ENCODE measurements at regions of chr12 and their contacts with region 1.

Region 1: GRCh38 chr12:47164724-47165439 is 85.1 kb upstream of the AMIGO2 start:
- DNase-seq: peak; percentile 21
- ATAC-seq: no peak; the same call in 1 of the 2 replicates
- H3K4me3 ChIP-seq: no peak overlapping the region
- H3K27ac ChIP-seq: no peak overlapping the region
- H3K4me1 ChIP-seq: no peaks in the 10 kb centered on the region
- H3K27me3 ChIP-seq: no peaks in the 10 kb centered on the region
- CTCF ChIP-seq: 0 out of 2 replicates have a peak, but pooled peaks have one; percentile 27

Region 2: GRCh38 chr12:47190271-47190750 is 25.4 kb after region 1 on chr12:
- CTCF ChIA-PET with region 1: no interaction called
- POLR2A ChIA-PET with region 1: no interaction called
- intact Hi-C with region 1: no loop called
- DNase-seq: peak; percentile 56
- ATAC-seq: 0 out of 2 replicates have a peak, but pooled peaks have one; percentile 33
- H3K4me3 ChIP-seq: no peak overlapping the region
- H3K27ac ChIP-seq: no peak overlapping the region
- H3K4me1 ChIP-seq: peaks cover 18% of the 10 kb centered on the region
- H3K27me3 ChIP-seq: no peaks in the 10 kb centered on the region
- CTCF ChIP-seq: no peak

Region 3: DNA sequence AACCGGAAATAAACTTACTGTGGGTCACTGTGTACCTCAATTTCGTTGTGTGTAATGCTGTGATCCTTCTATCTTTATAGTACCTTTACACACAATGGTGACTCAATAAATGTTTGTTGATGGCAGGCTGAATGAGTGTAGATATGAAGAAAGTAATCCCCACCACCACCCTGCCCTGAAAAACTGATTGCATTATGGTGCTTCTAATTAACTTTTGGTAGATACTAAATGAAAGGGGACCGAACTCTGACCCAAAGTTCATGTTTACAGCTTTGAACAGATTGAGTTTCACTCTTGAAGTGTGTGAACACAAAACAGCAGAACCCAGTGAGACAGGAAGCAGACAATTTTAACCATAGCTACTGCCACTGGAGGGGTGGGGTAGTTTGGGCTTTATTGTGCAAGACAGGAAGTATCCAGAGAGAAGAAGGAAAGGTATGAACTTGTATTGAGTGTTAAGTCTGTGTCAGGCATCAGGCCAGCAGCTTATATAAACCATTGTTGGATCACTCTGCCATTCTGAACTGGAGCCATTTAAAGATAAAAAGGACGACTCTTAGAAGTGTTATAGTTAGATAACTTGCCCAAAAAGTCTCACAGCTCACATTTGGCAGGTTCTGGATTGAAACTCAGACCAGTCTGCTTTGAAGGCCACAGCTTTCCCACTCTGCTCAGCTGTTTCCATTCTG is 111.9 kb after region 1 on chr12:
- CTCF ChIA-PET with region 1: interaction called, 13 read pairs
- POLR2A ChIA-PET with region 1: no interaction called
- intact Hi-C with region 1: no loop called
- DNase-seq: peak; percentile 90
- ATAC-seq: peak; percentile 57
- H3K4me3 ChIP-seq: no peak overlapping the region
- H3K27ac ChIP-seq: peak overlapping the region; percentile 79
- H3K4me1 ChIP-seq: peaks cover 69% of the 10 kb centered on the region
- H3K27me3 ChIP-seq: no peaks in the 10 kb centered on the region
- CTCF ChIP-seq: no peak

Measured in PC-3 (cell line).